Endothelial cell of umbilical vein (primary cell): ENCODE measurements at regions of chr4 and their contacts with region 1.

Region 1: DNA sequence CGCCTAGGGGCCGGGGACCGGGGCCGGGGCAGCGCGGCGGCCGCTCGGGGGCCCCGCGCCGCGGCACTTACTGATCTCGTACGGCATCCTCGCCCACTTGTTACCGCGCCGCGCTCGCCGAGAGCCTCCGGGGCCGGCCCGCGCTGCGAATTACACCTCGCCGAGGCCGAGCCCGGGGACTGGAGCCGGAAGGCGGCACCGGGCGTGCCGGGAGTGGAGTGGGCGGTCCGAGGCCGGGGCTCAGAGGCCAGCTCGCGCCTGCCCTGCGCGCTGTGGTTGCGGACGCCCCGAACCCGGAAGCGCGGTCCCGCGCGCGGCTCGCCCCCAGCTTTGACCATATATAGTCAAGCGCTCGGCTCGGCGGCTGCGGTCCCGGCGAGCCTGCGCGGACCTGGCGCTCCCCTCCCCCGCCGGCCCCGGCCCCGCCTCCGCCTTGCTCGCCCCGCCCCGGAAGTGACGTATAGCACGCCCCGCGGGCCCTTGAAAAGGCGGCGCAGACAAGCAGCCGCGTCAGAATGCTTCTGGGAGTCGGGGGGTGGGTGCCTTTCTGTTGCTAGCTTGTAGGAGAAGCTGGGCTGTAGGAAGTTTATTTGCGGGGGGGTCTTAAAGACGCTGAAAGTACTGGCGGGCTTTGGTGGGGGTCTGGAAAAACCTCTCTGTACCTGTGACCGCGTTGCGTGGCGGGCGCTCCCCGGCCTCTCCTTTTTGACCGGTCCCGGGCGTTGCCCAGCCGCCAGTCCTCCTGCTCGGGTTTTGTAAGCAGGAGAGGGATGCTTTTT is at the start of gene WDR1:
- DNase-seq: peak; percentile 95
- H3K4me3 ChIP-seq: peak within 1 kb of the TSS; percentile 13 to 91 (median 60)
- H3K27ac ChIP-seq: peak within 1 kb of the TSS; percentile 84
- H3K4me1 ChIP-seq: peaks cover 34% of the 10 kb centered on the region
- H3K27me3 ChIP-seq: no peaks in the 10 kb centered on the region
- CTCF ChIP-seq: no peak
- POLR2A ChIP-seq: peak; percentile 99
- total RNA-seq, gene WDR1: 547 and 590 TPM in 2 replicates

Region 2: DNA sequence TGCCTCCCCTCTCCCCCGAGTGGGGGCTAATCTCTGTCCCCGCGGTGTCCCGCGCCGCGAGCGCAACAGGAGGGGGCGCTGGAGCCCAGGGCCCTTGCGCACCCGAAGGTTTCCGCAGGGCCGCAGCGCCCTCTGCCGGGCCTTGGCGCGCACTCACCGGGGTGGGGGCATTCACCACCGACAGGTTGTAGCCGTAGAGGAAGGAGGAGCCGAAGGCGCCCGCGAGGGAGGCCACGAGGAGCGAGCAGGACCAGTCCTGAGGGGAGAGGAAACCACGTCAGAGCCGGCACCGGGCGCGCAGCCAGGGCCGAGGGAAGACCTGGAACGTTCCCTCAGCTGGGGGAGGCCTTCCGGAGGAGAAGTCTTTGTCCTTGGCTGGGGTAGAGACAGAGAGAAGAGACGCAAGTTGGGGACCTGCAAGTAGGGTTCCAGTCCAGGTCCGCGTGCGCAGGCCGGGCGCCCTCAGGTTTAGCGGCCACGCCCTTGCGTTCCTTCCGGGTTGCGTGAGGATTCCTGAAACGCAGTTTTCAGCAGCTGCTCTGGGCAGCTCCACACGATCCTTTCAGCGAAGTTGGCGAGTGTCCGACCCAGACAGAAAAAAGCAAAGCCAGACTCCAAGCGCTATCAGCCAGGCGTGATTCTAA is 97.8 kb before region 1 on chr4:
- CTCF ChIA-PET with region 1: no interaction called
- POLR2A ChIA-PET with region 1: interaction called, 3 read pairs
- dilution Hi-C with region 1: no loop called
- intact Hi-C with region 1: loop called (anchors 2 kb)
- DNase-seq: peak; percentile 95
- H3K4me3 ChIP-seq: peak overlapping the region in 2 of 3 experiments; percentile 25 to 27
- H3K27ac ChIP-seq: peak overlapping the region; percentile 50
- H3K4me1 ChIP-seq: peaks cover 6% of the 10 kb centered on the region
- H3K27me3 ChIP-seq: no peaks in the 10 kb centered on the region
- CTCF ChIP-seq: peak; percentile 100
- POLR2A ChIP-seq: peak; percentile 75

Region 3: DNA sequence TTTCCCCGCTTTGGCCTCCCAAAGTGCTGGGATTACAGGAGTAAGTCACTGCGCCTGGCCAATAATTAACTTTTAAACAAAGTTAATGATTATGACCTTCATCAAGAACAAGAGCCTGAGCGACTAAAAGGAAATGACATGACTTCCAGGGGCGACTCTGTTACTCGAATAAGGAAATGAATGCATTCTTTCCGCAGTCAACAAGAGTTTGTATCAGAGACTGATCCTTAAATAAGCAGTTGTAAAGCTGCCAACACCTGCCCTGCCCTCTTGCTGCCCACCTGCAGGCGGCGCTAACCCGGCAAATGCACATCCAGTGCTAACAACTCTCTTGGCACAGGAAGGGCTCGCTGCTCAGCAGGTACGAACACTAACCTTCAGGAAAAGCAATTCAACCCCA is 27.4 kb before region 1 on chr4:
- CTCF ChIA-PET with region 1: interaction called, 40 read pairs
- POLR2A ChIA-PET with region 1: interaction called, 49 read pairs
- dilution Hi-C with region 1: no loop called
- intact Hi-C with region 1: loop called (anchors 1 kb)
- DNase-seq: peak; percentile 85
- H3K4me3 ChIP-seq: no peak overlapping the region
- H3K27ac ChIP-seq: peak overlapping the region; percentile 43
- H3K4me1 ChIP-seq: peaks cover 43% of the 10 kb centered on the region
- H3K27me3 ChIP-seq: no peaks in the 10 kb centered on the region
- CTCF ChIP-seq: peak; percentile 84 to 95
- POLR2A ChIP-seq: peak; percentile 49

Region 4: GRCh38 chr4:10106421-10107039 is 10.2 kb before region 1 on chr4:
- CTCF ChIA-PET with region 1: interaction called, 5 read pairs
- POLR2A ChIA-PET with region 1: interaction called, 110 read pairs
- dilution Hi-C with region 1: no loop called
- intact Hi-C with region 1: loop called (anchors 1 kb)
- DNase-seq: peak; percentile 90
- H3K4me3 ChIP-seq: no peak overlapping the region
- H3K27ac ChIP-seq: peak overlapping the region; percentile 58
- H3K4me1 ChIP-seq: peaks cover 50% of the 10 kb centered on the region
- H3K27me3 ChIP-seq: no peaks in the 10 kb centered on the region
- CTCF ChIP-seq: no peak
- POLR2A ChIP-seq: peak; percentile 13

Region 5: GRCh38 chr4:10157478-10158332 is 40.9 kb after region 1 on chr4:
- CTCF ChIA-PET with region 1: interaction called, 13 read pairs
- POLR2A ChIA-PET with region 1: interaction called, 17 read pairs
- dilution Hi-C with region 1: no loop called
- intact Hi-C with region 1: loop called (anchors 5 kb)
- DNase-seq: peak; percentile 74
- H3K4me3 ChIP-seq: no peak overlapping the region
- H3K27ac ChIP-seq: no peak overlapping the region
- H3K4me1 ChIP-seq: no peaks in the 10 kb centered on the region
- H3K27me3 ChIP-seq: peaks cover 2 to 7% of the 10 kb centered on the region in 2 experiments
- CTCF ChIP-seq: peak; percentile 79 to 82
- POLR2A ChIP-seq: no peak

Region 6: DNA sequence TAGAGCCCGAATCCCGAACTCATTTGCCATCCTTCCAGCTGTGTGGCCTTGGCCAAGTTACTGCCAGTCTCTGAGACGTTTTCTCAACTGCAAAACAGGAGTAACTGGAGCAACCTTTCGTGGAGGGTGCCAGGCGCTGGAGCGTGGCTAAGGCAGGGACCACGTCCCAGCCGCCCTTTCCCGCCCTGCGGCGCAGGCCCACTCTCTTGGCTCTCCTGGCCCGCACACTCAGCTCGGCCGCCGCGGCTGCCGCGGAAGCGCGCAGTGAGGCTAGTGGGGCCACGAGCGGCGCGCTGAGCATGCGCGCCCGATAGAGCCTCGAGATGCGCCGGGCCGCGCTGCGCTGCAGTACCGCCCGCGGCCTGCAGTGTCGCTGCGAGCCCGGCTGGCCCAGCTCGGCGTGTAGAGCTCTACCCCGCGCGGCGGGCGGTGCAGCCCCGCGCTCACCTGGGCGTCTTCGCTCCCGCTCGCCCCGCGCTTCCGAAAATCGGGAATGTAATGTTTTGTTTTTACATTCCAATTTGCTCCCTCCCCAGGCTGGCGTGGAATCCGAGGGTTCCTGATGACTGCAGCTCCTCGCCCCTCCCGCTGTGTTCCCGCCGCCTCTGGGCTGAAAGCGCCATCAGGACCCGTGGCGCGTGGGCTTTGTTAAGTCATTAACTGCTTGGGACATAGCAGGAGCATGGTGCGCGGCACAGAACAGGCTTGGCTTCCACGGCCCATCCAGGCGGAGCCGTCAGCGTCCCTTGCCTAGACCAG is 344.5 kb after region 1 on chr4:
- CTCF ChIA-PET with region 1: interaction called, 3 read pairs
- POLR2A ChIA-PET with region 1: interaction called, 8 read pairs
- dilution Hi-C with region 1: no loop called
- intact Hi-C with region 1: loop called (anchors 2 kb)
- DNase-seq: peak; percentile 67
- H3K4me3 ChIP-seq: peak overlapping the region in 2 of 3 experiments; percentile 21 to 27
- H3K27ac ChIP-seq: no peak overlapping the region
- H3K4me1 ChIP-seq: peaks cover 17% of the 10 kb centered on the region
- H3K27me3 ChIP-seq: peaks cover 13 to 20% of the 10 kb centered on the region in 2 experiments
- CTCF ChIP-seq: peak; percentile 92 to 93
- POLR2A ChIP-seq: no peak

Region 7: GRCh38 chr4:11748164-11748872 is 1631.5 kb after region 1 on chr4:
- CTCF ChIA-PET with region 1: no interaction called
- POLR2A ChIA-PET with region 1: interaction called, 5 read pairs
- dilution Hi-C with region 1: no loop called
- intact Hi-C with region 1: loop called (anchors 10 kb)
- DNase-seq: peak; percentile 96
- H3K4me3 ChIP-seq: peak overlapping the region in 1 of 3 experiments; percentile 48
- H3K27ac ChIP-seq: peak overlapping the region; percentile 85
- H3K4me1 ChIP-seq: peaks cover 48% of the 10 kb centered on the region
- H3K27me3 ChIP-seq: no peaks in the 10 kb centered on the region
- CTCF ChIP-seq: no peak
- POLR2A ChIP-seq: no peak